Transverse colon (tissue), 4 donors: ENCODE measurements at regions of chr9 and their contacts with region 1.

Region 1: DNA sequence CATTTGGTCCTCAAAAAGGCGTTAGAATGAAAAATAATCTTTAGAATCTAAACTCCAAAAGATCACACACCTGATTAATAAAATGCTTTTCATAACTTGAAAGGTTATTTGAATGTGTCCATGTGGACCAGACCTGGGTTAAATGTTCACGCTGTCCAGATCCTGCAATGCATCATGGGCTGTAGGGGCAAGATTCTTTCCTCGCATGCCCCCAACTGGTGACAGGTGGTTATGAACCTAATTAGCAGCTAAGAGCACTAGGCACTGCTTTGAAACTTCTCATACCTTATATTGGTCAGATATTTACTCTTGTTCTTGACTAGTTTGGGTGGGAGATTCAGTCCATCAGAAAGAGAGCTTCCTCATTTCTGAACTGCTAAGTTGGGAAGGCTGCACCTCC is 19.3 kb upstream of the PIP5K1B start:
- DNase-seq: peak; percentile 67
- H3K4me3 ChIP-seq: no peak overlapping the region
- H3K27ac ChIP-seq: no peak overlapping the region
- H3K4me1 ChIP-seq: no peaks in the 10 kb centered on the region
- H3K27me3 ChIP-seq: peaks cover 4% of the 10 kb centered on the region
- CTCF ChIP-seq: peak; percentile 44 to 67 (median 49)
- EP300 ChIP-seq: no peak
- POLR2A ChIP-seq: no peak

Region 2: GRCh38 chr9:68567565-68567964 is 118.2 kb before region 1 on chr9:
- in situ Hi-C with region 1: no loop called
- intact Hi-C with region 1: no loop called
- DNase-seq: no peak
- H3K4me3 ChIP-seq: no peak overlapping the region
- H3K27ac ChIP-seq: no peak overlapping the region
- H3K4me1 ChIP-seq: peaks cover 0 to 3% (median 0%) of the 10 kb centered on the region in 4 donors
- H3K27me3 ChIP-seq: no peaks in the 10 kb centered on the region
- CTCF ChIP-seq: no peak
- EP300 ChIP-seq: no peak
- POLR2A ChIP-seq: no peak

Region 3: GRCh38 chr9:68739621-68740174 is 53.9 kb after region 1 on chr9:
- in situ Hi-C with region 1: no loop called
- intact Hi-C with region 1: loop called (anchors 2 kb)
- DNase-seq: peak; percentile 66
- H3K4me3 ChIP-seq: peak overlapping the region in 2 of 4 donors; percentile 13 to 33
- H3K27ac ChIP-seq: peak overlapping the region; percentile 79 to 91 (median 85)
- H3K4me1 ChIP-seq: peaks cover 14 to 70% (median 34%) of the 10 kb centered on the region in 4 donors
- H3K27me3 ChIP-seq: no peaks in the 10 kb centered on the region
- CTCF ChIP-seq: no peak
- EP300 ChIP-seq: no peak
- POLR2A ChIP-seq: peak; percentile 54